Ovary (tissue), 10 donors: ENCODE measurements at regions of chr2 and their contacts with region 1.

Region 1: GRCh38 chr2:220882507-220882906 is 689.6 kb downstream of the EPHA4 start:
- DNase-seq: no peak
- H3K4me3 ChIP-seq: no peak overlapping the region
- H3K27ac ChIP-seq: no peak overlapping the region
- H3K4me1 ChIP-seq: no peaks in the 10 kb centered on the region
- H3K27me3 ChIP-seq: no peaks in the 10 kb centered on the region
- CTCF ChIP-seq: no peak
- EP300 ChIP-seq: no peak
- POLR2A ChIP-seq: no peak

Region 2: DNA sequence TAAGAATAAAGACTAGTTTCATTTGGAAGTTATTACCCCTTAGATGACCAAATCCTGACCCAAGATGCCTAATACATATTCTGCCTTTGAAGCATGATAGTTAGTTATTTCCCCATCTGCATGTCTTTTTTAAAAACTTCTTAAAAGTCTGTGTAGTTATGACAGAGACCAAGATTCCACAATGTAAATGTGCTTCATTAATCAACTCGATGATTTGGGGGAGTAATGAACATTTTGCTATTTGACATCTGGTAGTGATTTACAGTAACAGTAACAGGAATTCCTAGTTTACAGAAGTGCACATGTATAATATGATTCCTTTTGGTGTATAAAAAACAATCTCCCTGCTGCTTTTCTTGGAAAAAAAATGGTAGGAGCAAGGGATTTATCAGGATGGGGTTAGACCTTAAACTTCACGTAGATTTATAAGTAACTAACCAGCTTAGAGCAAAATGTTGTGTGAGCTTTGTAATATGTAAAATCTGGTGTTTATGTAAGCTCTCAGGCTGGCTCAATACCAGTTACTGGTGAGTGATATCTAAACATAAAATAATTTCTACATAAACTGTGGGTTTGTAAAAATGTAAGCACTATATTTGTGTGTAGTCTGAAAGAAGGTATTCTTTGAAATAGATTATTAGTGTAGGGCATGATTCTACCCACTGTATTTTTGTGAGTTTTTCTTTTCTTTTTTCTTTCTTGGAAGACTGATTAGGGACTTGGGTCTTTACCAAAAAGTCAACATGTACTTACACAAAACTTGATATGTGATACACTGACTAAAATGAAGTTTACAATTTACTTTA is 48.0 kb after region 1 on chr2:
- intact Hi-C with region 1: loop called in 1 of 4 experiments (anchors 2 kb)
- DNase-seq: no peak
- H3K4me3 ChIP-seq: no peak overlapping the region
- H3K27ac ChIP-seq: no peak overlapping the region
- H3K4me1 ChIP-seq: no peaks in the 10 kb centered on the region
- H3K27me3 ChIP-seq: no peaks in the 10 kb centered on the region
- CTCF ChIP-seq: no peak
- EP300 ChIP-seq: no peak
- POLR2A ChIP-seq: no peak